ENCODE measurements at regions of chr7 and their contacts with region 1.

Region 1: DNA sequence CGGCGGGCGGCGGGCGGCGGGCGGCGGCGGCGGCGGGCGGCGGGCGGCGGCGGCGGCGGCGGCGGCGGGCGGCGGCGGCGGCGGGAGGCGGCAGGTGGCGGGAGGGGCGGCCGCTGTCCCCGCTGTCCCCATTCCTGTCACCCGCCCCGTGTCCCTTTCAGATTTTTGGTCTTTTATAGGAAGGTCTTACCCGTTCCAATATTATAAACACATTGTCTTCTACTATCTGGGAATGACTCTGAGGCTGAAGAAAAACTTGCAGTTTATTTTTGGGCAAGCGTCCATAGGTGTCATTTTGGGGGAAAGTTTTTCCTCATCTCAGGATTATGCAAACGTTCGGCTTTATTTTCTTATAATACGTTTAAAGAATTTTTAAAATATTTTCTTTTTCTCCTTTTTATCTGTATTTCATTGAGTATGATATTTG is 578 bp downstream of the ZNF713 start:
- DNase-seq: no peak
- H3K4me3 ChIP-seq: peak overlapping the region; percentile 59 to 75
- H3K27ac ChIP-seq: peak overlapping the region in 1 of 2 donors; percentile 65
- H3K4me1 ChIP-seq: peaks cover 0 to 8% of the 10 kb centered on the region in 2 donors
- H3K27me3 ChIP-seq: no peaks in the 10 kb centered on the region
- CTCF ChIP-seq: no peak

Region 2: DNA sequence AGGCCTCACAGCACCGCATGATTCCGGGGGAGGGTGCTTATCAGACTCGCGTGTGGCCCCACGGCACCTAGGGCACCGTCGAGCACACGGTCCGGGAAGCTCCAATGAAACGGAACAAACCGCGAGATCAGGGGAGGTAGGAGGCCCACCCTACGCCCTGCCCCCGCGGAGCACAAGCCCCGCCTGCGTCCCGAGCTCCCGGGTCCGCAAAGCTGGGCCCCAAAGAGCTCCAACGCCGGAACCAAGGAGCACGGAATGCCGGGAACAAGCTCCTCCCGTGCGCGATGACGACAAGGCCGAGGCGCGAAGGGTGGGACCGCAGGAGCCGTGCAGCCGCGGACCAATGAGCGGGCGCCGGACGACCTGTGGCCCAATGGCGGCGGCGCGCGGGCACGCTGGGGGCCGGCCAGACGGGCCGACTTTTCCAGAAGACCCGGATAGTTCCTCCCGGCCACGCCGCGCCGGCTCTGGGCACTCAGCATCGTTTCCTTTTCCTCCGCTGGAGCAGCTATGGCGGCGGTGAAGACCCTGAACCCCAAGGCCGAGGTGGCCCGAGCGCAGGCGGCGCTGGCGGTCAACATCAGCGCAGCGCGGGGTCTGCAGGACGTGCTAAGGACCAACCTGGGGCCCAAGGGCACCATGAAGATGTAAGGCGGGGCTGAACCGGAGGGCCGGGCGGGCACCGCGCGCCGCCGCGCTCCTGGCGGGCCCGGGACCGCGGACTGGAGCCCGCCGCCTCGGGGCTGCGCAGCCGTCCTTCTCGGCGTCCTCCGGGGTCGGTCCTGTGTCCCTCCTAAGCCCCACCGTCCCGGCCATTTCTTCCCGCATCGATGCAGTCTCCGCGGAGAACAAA is 163.7 kb after region 1 on chr7 and contains the starts of genes CCT6A and PSPH:
- intact Hi-C with region 1: loop called (anchors 1 kb)
- DNase-seq: peak; percentile 87 to 99
- H3K4me3 ChIP-seq: peak within 1 kb of the TSS; percentile 94
- H3K27ac ChIP-seq: peak within 1 kb of the TSS; percentile 92 to 95
- H3K4me1 ChIP-seq: peaks cover 0 to 26% of the 10 kb centered on the region in 2 donors
- H3K27me3 ChIP-seq: no peaks in the 10 kb centered on the region
- CTCF ChIP-seq: no peak
- total RNA-seq, gene CCT6A: 86.2 TPM
- total RNA-seq, gene PSPH: not detected

Region 3: GRCh38 chr7:56097700-56098099 is 209.9 kb after region 1 on chr7:
- intact Hi-C with region 1: no loop called
- DNase-seq: no peak
- H3K4me3 ChIP-seq: no peak overlapping the region
- H3K27ac ChIP-seq: peak overlapping the region in 1 of 2 donors; percentile 48
- H3K4me1 ChIP-seq: peaks cover 3 to 8% of the 10 kb centered on the region in 2 donors
- H3K27me3 ChIP-seq: no peaks in the 10 kb centered on the region
- CTCF ChIP-seq: no peak

Region 4: GRCh38 chr7:56174810-56175760 is 287.3 kb after region 1 on chr7:
- intact Hi-C with region 1: loop called (anchors 5 kb)
- DNase-seq: peak in 1 of 2 donors; percentile 82
- H3K4me3 ChIP-seq: peak overlapping the region; percentile 69 to 81
- H3K27ac ChIP-seq: peak overlapping the region; percentile 71
- H3K4me1 ChIP-seq: no peaks in the 10 kb centered on the region
- H3K27me3 ChIP-seq: no peaks in the 10 kb centered on the region
- CTCF ChIP-seq: no peak

Region 5: DNA sequence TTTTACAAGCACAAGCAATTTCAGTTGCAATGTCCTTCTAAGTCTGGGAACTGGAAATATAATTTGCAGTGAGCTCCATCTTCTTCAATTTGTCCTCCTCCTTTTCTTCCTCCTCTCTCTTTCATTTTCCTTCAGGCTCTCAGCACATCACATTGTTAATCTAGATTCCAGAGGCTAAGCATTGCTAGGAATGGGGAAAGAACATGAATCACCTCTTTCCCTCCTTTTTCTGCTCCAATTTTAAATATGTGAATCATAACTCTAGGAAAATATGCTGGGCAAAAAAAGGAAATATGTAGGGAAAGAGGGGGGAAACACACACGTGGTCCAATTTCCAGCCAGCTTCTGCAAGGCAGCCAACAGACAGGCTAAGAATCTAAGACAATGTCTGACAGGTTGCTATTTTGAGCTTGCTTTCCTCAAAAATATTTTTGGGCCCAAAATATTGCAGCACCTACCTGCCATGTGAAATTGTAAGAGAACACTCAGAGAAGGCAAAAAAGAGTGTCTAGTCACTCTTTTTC is 301.1 kb after region 1 on chr7:
- intact Hi-C with region 1: loop called (anchors 2 kb)
- DNase-seq: peak in 1 of 2 donors; percentile 74
- H3K4me3 ChIP-seq: no peak overlapping the region
- H3K27ac ChIP-seq: peak overlapping the region; percentile 76 to 78
- H3K4me1 ChIP-seq: peaks cover 4 to 17% of the 10 kb centered on the region in 2 donors
- H3K27me3 ChIP-seq: no peaks in the 10 kb centered on the region
- CTCF ChIP-seq: no peak